Activated CD4-positive, alpha-beta memory T cell treated with anti-CD3 and anti-CD28 coated beads for 36 hours (primary cell): ENCODE measurements at regions of chr17 and their contacts with region 1.

Region 1: DNA sequence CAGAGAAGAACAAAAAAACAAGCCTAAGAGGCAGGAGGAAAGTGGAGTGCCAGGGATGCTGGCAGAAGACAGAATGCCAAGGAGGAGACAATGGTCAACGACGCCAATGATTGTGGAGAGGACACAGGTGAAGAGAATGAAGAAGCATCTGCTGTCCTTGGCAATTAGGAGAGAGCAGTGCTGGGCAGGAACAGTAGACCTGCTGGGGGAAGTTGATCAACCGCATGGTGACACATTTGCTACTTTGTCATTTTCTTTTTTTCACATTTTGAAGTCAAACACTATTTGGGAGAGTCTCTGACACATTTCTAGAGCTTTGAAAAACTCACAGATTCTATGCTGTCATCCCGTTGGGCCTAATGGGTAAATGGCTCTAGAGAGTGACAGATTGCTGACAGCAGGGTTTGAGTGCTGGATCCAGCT is 1.1 kb upstream of the PIK3R6 start:
- DNase-seq: peak; percentile 49
- H3K4me3 Mint-ChIP-seq: no peak overlapping the region
- H3K27ac Mint-ChIP-seq: no peak overlapping the region
- H3K4me1 Mint-ChIP-seq: peaks cover 28% of the 10 kb centered on the region
- H3K27me3 Mint-ChIP-seq: no peaks in the 10 kb centered on the region

Region 2: GRCh38 chr17:8857919-8858318 is 10.6 kb before region 1 on chr17:
- CTCF ChIA-PET with region 1: no interaction called
- POLR2A ChIA-PET with region 1: no interaction called
- intact Hi-C with region 1: loop called (anchors 1 kb)
- DNase-seq: peak; percentile 82
- H3K4me3 Mint-ChIP-seq: no peak overlapping the region
- H3K27ac Mint-ChIP-seq: no peak overlapping the region
- H3K4me1 Mint-ChIP-seq: peaks cover 46% of the 10 kb centered on the region
- H3K27me3 Mint-ChIP-seq: no peaks in the 10 kb centered on the region